SK-N-SH (cell line): ENCODE measurements at regions of chr17 and their contacts with region 1.

Region 1: GRCh38 chr17:74337834-74338500 is 11.9 kb downstream of the KIF19 start:
- DNase-seq: peak; percentile 36
- H3K4me3 ChIP-seq: no peak overlapping the region
- H3K27ac ChIP-seq: no peak overlapping the region
- H3K4me1 ChIP-seq: no peaks in the 10 kb centered on the region
- H3K27me3 ChIP-seq: no peaks in the 10 kb centered on the region
- CTCF ChIP-seq: no peak
- EP300 ChIP-seq: no peak
- RAD21 ChIP-seq: no peak

Region 2: DNA sequence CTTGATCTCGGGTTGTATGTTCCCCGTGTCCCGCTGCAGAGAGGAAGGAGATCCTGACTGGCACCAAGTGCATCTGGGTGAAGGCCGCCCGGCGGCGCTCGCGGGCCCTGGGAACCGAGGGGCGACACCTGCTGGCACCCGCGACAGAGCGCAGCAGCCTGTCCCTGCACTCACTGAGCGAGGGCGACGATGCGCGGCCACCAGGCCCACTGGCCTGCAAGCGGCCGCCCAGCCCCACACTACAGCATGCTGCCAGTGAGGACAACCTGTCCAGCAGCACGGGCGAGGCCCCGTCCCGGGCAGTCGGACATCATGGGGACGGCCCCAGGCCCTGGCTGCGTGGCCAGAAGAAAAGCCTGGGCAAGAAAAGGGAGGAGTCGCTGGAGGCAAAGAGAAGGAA is 16.2 kb after region 1 on chr17:
- CTCF ChIA-PET with region 1: interaction called, 194 read pairs
- POLR2A ChIA-PET with region 1: no interaction called
- DNase-seq: peak; percentile 94
- H3K4me3 ChIP-seq: no peak overlapping the region
- H3K27ac ChIP-seq: no peak overlapping the region
- H3K4me1 ChIP-seq: peaks cover 0 to 2% of the 10 kb centered on the region in 2 experiments; a peak in 1 of 4 replicates
- H3K27me3 ChIP-seq: no peaks in the 10 kb centered on the region
- CTCF ChIP-seq: no peak
- EP300 ChIP-seq: no peak
- RAD21 ChIP-seq: peak; percentile 54

Region 3: GRCh38 chr17:74361230-74362068 is 23.5 kb after region 1 on chr17 and contains the start of gene BTBD17:
- CTCF ChIA-PET with region 1: interaction called, 194 read pairs
- POLR2A ChIA-PET with region 1: no interaction called
- DNase-seq: peak; percentile 78
- H3K4me3 ChIP-seq: peak within 1 kb of the TSS in 1 of 2 experiments; percentile 49; a peak in 1 of 4 replicates
- H3K27ac ChIP-seq: no peak within 1 kb of the TSS
- H3K4me1 ChIP-seq: no peaks in the 10 kb centered on the region; a peak in 1 of 4 replicates
- H3K27me3 ChIP-seq: no peaks in the 10 kb centered on the region
- CTCF ChIP-seq: no peak
- EP300 ChIP-seq: no peak
- RAD21 ChIP-seq: peak; percentile 40
- polyA plus RNA-seq, gene BTBD17: not detected in 2 replicates